ENCODE measurements at regions of chr2 and their contacts with region 1.

Region 1: DNA sequence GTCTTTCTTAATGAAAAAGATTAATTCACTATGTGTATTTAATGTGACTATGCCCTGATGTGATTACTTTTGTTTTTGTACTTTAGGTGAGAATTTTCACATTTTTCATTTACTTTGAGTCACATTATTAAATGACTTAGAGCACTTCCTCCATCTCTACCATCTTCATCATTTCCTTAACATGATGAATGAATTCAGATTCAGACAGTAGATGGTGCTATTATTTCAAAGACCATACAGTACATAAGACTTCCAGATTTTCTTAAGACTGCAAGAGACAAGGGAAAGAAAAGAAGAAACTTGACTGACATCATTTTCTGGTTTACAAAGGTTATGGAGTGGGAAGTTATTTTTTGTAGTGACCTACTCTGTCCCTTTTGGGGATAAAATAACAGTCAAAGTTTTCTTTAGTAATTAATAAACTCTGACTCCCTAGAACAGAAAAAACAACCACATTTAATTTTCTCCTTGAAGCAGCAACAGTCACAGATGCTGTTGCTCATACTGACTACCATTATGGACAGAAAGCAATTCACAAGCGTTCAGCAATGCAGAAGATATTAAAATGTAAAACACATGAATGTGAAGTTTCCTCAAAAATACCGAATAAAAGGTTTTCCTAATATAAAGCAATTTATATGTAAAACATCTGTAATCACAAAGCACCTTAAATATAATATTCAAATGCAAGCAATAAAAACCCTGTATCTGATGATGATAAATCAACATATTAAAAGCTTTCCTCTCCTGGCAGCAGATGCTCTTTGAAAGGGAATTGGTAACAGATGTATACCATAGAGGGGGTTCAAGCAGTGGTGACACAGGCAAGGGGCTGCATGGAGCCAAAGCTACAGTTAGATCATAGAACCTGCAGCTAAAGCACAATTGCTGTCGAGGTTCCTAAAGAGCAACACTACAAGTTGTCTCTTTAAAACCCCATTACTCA is 1010.9 kb upstream of the NXPH2 start:
- DNase-seq: peak; percentile 45
- H3K4me3 ChIP-seq: no peak overlapping the region
- H3K27ac ChIP-seq: no peak overlapping the region
- H3K4me1 ChIP-seq: no peaks in the 10 kb centered on the region
- H3K27me3 ChIP-seq: no peaks in the 10 kb centered on the region
- CTCF ChIP-seq: no peak
- POLR2A ChIP-seq: no peak

Region 2: GRCh38 chr2:138922973-138923563 is 868.0 kb before region 1 on chr2:
- CTCF ChIA-PET with region 1: no interaction called
- POLR2A ChIA-PET with region 1: no interaction called
- dilution Hi-C with region 1: no loop called
- intact Hi-C with region 1: loop called (anchors 5 kb)
- DNase-seq: peak; percentile 15
- H3K4me3 ChIP-seq: no peak overlapping the region
- H3K27ac ChIP-seq: no peak overlapping the region
- H3K4me1 ChIP-seq: no peaks in the 10 kb centered on the region
- H3K27me3 ChIP-seq: no peaks in the 10 kb centered on the region
- CTCF ChIP-seq: peak; percentile 5 to 11
- POLR2A ChIP-seq: no peak

Region 3: GRCh38 chr2:139631966-139632365 is 159.1 kb before region 1 on chr2:
- CTCF ChIA-PET with region 1: no interaction called
- POLR2A ChIA-PET with region 1: no interaction called
- dilution Hi-C with region 1: no loop called
- intact Hi-C with region 1: no loop called
- DNase-seq: no peak
- H3K4me3 ChIP-seq: no peak overlapping the region
- H3K27ac ChIP-seq: no peak overlapping the region
- H3K4me1 ChIP-seq: no peaks in the 10 kb centered on the region
- H3K27me3 ChIP-seq: no peaks in the 10 kb centered on the region
- CTCF ChIP-seq: no peak
- POLR2A ChIP-seq: no peak

Region 4: GRCh38 chr2:139946693-139947092 is 155.6 kb after region 1 on chr2:
- CTCF ChIA-PET with region 1: no interaction called
- POLR2A ChIA-PET with region 1: no interaction called
- dilution Hi-C with region 1: no loop called
- intact Hi-C with region 1: loop called (anchors 5 kb)
- DNase-seq: peak; percentile 12
- H3K4me3 ChIP-seq: no peak overlapping the region
- H3K27ac ChIP-seq: no peak overlapping the region
- H3K4me1 ChIP-seq: no peaks in the 10 kb centered on the region
- H3K27me3 ChIP-seq: no peaks in the 10 kb centered on the region
- CTCF ChIP-seq: peak; percentile 11 to 13
- POLR2A ChIP-seq: no peak

Region 5: DNA sequence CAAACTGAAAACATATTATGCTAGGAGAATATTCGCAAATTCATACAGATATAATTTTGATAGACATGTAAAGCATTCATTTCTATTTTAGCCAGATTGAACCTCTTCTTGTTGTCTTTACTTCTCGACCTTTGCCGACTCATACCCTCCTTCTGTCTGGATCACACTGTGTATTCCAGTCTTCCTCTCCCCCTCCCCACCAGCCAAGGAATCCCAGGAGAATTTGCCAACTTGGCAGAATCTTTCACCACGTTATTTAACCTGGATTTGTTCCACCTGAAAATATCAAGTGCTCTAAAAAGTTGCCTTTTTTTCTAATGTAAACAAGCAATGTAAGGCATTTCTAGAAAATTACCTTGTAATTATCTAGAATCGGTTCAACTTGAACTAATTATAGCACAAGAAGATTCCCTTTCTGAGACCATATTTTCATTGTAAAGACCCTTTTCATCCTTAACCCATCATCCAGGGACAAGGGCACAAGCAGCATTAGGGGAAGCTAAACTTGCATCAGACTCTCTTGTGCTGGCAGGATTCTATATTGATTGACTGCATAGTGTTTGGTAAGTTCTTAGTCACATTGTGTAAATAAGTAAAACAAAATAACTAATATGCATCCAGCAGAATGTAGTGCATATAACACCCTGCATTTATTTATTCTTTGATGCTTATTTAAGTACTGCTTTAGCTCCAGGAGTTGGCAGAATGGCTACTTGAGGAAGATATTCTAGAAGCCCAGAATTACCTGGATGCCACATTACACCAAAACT is 317.8 kb after region 1 on chr2:
- CTCF ChIA-PET with region 1: no interaction called
- POLR2A ChIA-PET with region 1: no interaction called
- dilution Hi-C with region 1: no loop called
- intact Hi-C with region 1: no loop called
- DNase-seq: no peak
- H3K4me3 ChIP-seq: no peak overlapping the region
- H3K27ac ChIP-seq: no peak overlapping the region
- H3K4me1 ChIP-seq: no peaks in the 10 kb centered on the region
- H3K27me3 ChIP-seq: no peaks in the 10 kb centered on the region
- CTCF ChIP-seq: no peak
- POLR2A ChIP-seq: no peak

Measured in endothelial cell of umbilical vein (primary cell).